ENCODE measurements at regions of chr6 and their contacts with region 1.

Region 1: GRCh38 chr6:85449818-85450759 is at the start of gene NT5E:
- DNase-seq: peak; percentile 86
- H3K4me3 Mint-ChIP-seq: peak within 1 kb of the TSS; percentile 87
- H3K27ac Mint-ChIP-seq: peak within 1 kb of the TSS; percentile 89
- H3K4me1 Mint-ChIP-seq: peaks cover 65% of the 10 kb centered on the region
- H3K27me3 Mint-ChIP-seq: peaks cover 19% of the 10 kb centered on the region
- total RNA-seq, gene NT5E: 14.8 and 15.2 TPM in 2 replicates

Region 2: DNA sequence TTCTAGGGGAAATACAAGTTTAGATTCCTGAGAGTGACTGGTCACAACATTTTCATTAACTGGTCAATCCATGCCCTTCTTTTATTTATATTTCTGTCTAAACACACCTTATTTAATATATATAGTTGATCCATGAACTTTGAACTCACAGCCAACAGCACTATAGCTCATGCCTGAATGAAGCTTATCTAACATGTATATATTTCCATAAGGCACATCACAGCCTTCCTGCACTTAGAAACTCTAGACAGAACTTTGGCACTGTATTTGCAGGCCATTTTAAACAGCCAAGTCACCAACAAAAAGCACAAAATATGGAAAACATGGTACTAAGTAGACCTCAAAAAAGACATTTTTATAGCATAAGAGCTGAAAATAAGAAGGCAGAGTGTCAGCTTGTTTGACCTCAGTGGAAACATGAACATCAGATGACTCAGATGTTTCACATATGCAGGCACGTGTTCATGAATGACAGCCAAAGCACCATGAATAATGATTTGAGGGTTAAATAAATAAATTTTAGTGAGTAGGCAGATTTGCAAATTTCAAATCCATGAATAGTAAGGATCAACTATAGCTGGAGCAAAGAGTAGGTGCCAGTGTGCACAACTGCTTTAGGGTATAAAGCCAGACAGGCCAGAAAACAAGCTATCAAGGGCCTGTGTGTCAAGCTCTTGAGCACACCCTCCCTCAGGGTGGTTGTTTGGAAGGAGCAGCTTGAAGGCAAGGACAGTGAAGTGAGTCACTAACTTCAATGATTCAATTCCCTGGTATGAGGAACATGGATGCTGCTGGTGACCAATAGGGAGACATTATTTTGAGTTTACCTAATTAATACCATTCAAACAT is 89.1 kb before region 1 on chr6:
- intact Hi-C with region 1: loop called (anchors 1 kb)
- DNase-seq: no peak
- H3K4me3 Mint-ChIP-seq: no peak overlapping the region
- H3K27ac Mint-ChIP-seq: peak overlapping the region; percentile 65
- H3K4me1 Mint-ChIP-seq: peaks cover 12% of the 10 kb centered on the region
- H3K27me3 Mint-ChIP-seq: no peaks in the 10 kb centered on the region

Region 3: GRCh38 chr6:85372188-85372914 is 77.7 kb before region 1 on chr6:
- intact Hi-C with region 1: no loop called
- DNase-seq: no peak
- H3K4me3 Mint-ChIP-seq: no peak overlapping the region
- H3K27ac Mint-ChIP-seq: no peak overlapping the region
- H3K4me1 Mint-ChIP-seq: peaks cover 9% of the 10 kb centered on the region
- H3K27me3 Mint-ChIP-seq: no peaks in the 10 kb centered on the region

Region 4: GRCh38 chr6:85383042-85383441 is 67.0 kb before region 1 on chr6:
- intact Hi-C with region 1: no loop called
- DNase-seq: no peak
- H3K4me3 Mint-ChIP-seq: no peak overlapping the region
- H3K27ac Mint-ChIP-seq: no peak overlapping the region
- H3K4me1 Mint-ChIP-seq: peaks cover 8% of the 10 kb centered on the region
- H3K27me3 Mint-ChIP-seq: no peaks in the 10 kb centered on the region

Region 5: DNA sequence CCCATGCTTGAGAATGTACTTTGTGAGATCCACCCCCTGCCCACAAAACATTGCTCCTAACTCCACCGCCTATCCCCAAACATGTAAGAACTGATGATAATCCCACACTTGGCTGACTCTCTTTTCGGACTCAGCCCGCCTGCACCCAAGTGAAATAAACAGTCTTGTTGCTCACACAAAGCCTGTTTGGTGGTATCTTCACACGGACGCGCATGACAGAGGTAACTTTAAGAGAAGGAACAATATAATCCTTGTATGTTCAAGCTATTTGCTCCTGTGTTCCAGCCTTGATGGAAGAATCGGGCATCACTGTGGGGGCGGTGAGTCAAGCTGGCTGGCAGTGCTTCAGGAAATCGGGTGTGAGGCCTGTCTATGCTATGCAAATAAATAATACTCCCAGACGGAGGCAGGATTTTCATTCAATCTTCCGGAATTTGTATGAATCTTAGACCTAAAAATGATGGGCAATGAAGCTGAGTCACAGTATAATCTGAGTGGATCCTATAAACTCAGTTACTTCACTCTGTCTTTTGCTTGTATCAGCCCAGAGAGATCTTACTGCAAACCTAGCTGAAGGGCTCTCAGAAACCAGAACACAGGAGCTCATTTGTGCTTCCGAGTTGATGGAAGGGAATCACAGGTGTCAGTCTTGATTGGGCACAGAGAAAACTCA is 45.5 kb before region 1 on chr6:
- intact Hi-C with region 1: loop called (anchors 5 kb)
- DNase-seq: peak; percentile 55
- H3K4me3 Mint-ChIP-seq: peak overlapping the region; percentile 40
- H3K27ac Mint-ChIP-seq: peak overlapping the region; percentile 73
- H3K4me1 Mint-ChIP-seq: peaks cover 62% of the 10 kb centered on the region
- H3K27me3 Mint-ChIP-seq: peaks cover 2% of the 10 kb centered on the region

Region 6: GRCh38 chr6:85460921-85461797 is 11.1 kb after region 1 on chr6:
- intact Hi-C with region 1: loop called (anchors 1 kb)
- DNase-seq: peak; percentile 91
- H3K4me3 Mint-ChIP-seq: peak overlapping the region; percentile 70
- H3K27ac Mint-ChIP-seq: peak overlapping the region; percentile 93
- H3K4me1 Mint-ChIP-seq: peaks cover 91% of the 10 kb centered on the region
- H3K27me3 Mint-ChIP-seq: no peaks in the 10 kb centered on the region

Region 7: GRCh38 chr6:85593438-85594196 is 143.5 kb after region 1 on chr6 and contains the start of gene SNX14:
- intact Hi-C with region 1: loop called (anchors 2 kb)
- DNase-seq: peak; percentile 93
- H3K4me3 Mint-ChIP-seq: peak within 1 kb of the TSS; percentile 97
- H3K27ac Mint-ChIP-seq: peak within 1 kb of the TSS; percentile 96
- H3K4me1 Mint-ChIP-seq: peaks cover 20% of the 10 kb centered on the region
- H3K27me3 Mint-ChIP-seq: peaks cover 3% of the 10 kb centered on the region
- total RNA-seq, gene SNX14: 45.4 and 47.1 TPM in 2 replicates

Region 8: GRCh38 chr6:85678602-85679444 is 228.7 kb after region 1 on chr6:
- intact Hi-C with region 1: loop called (anchors 1 kb)
- DNase-seq: peak; percentile 99
- H3K4me3 Mint-ChIP-seq: peak overlapping the region; percentile 95
- H3K27ac Mint-ChIP-seq: peak overlapping the region; percentile 97
- H3K4me1 Mint-ChIP-seq: peaks cover 38% of the 10 kb centered on the region
- H3K27me3 Mint-ChIP-seq: no peaks in the 10 kb centered on the region